H1 (cell line): ENCODE measurements at regions of chr19 and their contacts with region 1.

Region 1: DNA sequence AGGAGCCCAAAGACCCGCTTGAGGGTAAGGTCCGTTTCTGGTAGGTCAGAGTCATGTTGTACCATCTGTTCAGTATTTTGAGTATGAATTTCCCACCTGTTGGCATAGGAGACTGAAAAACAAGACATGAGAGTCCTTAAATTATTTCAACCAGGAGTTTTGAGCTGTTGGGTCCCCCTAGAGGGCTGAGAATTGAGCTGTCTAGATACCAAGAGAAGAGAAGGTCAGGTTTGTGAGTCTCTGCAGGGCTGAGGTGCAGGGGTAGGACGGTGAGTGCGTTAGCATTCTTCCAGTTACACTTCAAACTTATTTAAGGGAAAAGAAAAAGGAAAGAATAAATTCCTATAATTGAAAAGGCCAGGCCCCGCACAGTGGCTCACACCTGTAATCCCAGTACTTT is 5.0 kb downstream of the CBLC start:
- DNase-seq: no peak
- H3K4me3 ChIP-seq: no peak overlapping the region
- H3K27ac ChIP-seq: no peak overlapping the region
- H3K4me1 ChIP-seq: no peaks in the 10 kb centered on the region
- H3K27me3 ChIP-seq: no peaks in the 10 kb centered on the region
- CTCF ChIP-seq: no peak
- EP300 ChIP-seq: no peak
- POLR2A ChIP-seq: no peak
- RAD21 ChIP-seq: 0 out of 4 replicates have a peak, but pooled peaks of 1 of the 2 experiments have one; percentile 5

Region 2: DNA sequence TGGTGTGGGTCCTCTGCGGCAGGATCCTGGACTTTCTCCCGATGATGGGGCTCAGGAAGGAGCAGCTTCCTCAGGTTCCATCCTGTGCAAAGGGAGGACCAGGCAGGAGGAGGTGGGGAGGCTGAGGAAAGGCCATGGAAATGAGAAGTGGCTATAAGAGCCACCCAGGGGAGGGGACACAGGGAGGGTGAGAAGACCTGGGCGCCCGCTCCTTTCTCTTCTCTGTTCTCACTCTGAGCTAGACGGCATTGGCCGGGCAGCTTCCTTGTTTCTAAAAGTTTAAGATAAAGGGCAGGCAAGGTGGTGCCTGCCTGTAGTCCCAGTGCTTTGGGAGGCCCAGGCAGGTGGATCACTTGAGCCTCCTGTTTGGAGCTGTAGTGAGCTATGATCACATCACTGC is 50.1 kb before region 1 on chr19:
- CTCF ChIA-PET with region 1: interaction called, 12 read pairs
- POLR2A ChIA-PET with region 1: no interaction called
- DNase-seq: no peak
- H3K4me3 ChIP-seq: no peak overlapping the region
- H3K27ac ChIP-seq: no peak overlapping the region
- H3K4me1 ChIP-seq: no peaks in the 10 kb centered on the region; a peak in 1 of 7 replicates
- H3K27me3 ChIP-seq: no peaks in the 10 kb centered on the region
- CTCF ChIP-seq: no peak
- EP300 ChIP-seq: no peak
- POLR2A ChIP-seq: no peak
- RAD21 ChIP-seq: no peak

Region 3: DNA sequence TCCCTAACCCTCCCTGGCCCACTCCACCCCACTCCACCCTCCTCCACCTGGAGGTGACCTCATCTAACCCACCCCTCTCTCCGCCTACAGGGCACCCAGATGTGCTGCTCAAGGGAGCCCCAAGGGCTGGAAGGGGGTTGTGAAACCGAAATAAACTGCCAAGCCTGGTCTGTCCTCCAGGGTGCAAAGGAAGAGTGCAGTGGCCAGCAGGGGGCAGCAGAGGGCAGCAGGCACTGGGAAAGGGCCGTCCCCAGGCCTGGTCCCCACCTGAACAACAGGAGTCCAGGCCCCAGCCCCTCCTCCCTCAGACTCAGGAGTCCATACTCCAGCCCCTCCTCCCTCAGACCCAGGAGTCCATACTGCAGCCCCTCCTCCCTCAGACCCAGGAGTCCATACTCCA is 17.7 kb after region 1 on chr19:
- CTCF ChIA-PET with region 1: interaction called, 116 read pairs
- POLR2A ChIA-PET with region 1: interaction called, 8 read pairs
- DNase-seq: peak; percentile 91 to 99
- H3K4me3 ChIP-seq: no peak overlapping the region
- H3K27ac ChIP-seq: no peak overlapping the region
- H3K4me1 ChIP-seq: peaks cover 5 to 10% (median 6%) of the 10 kb centered on the region in 4 experiments; a peak in 6 of 7 replicates
- H3K27me3 ChIP-seq: peaks cover 0 to 19% (median 17%) of the 10 kb centered on the region in 4 experiments; a peak in 6 of 7 replicates
- CTCF ChIP-seq: peak; percentile 96 to 99 (median 99)
- EP300 ChIP-seq: no peak
- POLR2A ChIP-seq: no peak
- RAD21 ChIP-seq: peak; percentile 76 to 78

Region 4: DNA sequence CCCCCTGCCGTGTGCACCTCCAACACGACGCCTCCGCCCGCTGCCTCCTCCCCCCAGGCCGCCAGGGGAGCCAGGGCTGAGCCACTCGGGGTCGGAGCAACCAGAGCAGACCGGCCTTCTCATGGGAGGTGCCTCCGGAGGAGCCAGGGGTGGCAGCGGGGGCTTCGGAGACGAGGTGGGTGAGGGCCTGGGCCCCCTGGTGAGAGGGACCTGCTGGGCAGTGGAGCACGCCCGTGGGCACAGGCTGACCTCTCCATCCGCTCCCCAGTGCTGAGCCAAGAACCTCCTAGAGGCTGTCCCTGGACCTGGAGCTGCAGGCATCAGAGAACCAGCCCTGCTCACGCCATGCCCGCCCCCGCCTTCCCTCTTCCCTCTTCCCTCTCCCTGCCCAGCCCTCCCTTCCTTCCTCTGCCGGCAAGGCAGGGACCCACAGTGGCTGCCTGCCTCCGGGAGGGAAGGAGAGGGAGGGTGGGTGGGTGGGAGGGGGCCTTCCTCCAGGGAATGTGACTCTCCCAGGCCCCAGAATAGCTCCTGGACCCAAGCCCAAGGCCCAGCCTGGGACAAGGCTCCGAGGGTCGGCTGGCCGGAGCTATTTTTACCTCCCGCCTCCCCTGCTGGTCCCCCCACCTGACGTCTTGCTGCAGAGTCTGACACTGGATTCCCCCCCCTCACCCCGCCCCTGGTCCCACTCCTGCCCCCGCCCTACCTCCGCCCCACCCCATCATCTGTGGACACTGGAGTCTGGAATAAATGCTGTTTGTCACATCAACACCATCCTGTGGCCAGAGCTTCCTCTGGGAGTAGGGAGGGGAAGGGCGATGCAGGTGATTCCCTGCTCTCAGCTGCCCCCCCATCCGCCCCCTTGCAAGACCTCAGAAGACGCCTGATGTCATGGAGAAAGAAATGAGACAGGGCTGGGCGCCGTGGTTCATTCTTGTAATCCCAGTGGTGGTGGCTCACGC is 38.2 kb after region 1 on chr19:
- CTCF ChIA-PET with region 1: interaction called, 19 read pairs
- POLR2A ChIA-PET with region 1: interaction called, 3 read pairs
- DNase-seq: no peak
- H3K4me3 ChIP-seq: no peak overlapping the region
- H3K27ac ChIP-seq: no peak overlapping the region
- H3K4me1 ChIP-seq: 0 out of 7 replicates have a peak, but pooled peaks cover 0 to 3% (median 0%) of the 10 kb centered on the region in 4 experiments
- H3K27me3 ChIP-seq: peaks cover 0 to 10% (median 5%) of the 10 kb centered on the region in 4 experiments; a peak in 4 of 7 replicates
- CTCF ChIP-seq: no peak
- EP300 ChIP-seq: no peak
- POLR2A ChIP-seq: no peak
- RAD21 ChIP-seq: no peak

Region 5: GRCh38 chr19:44875666-44876451 is 93.1 kb after region 1 on chr19:
- CTCF ChIA-PET with region 1: no interaction called
- POLR2A ChIA-PET with region 1: no interaction called
- DNase-seq: no peak
- H3K4me3 ChIP-seq: no peak overlapping the region
- H3K27ac ChIP-seq: no peak overlapping the region
- H3K4me1 ChIP-seq: peaks cover 0 to 20% (median 3%) of the 10 kb centered on the region in 4 experiments; a peak in 5 of 7 replicates
- H3K27me3 ChIP-seq: no peaks in the 10 kb centered on the region
- CTCF ChIP-seq: no peak
- EP300 ChIP-seq: no peak
- POLR2A ChIP-seq: no peak
- RAD21 ChIP-seq: no peak

Region 6: GRCh38 chr19:44889830-44890365 is 107.2 kb after region 1 on chr19:
- CTCF ChIA-PET with region 1: no interaction called
- POLR2A ChIA-PET with region 1: no interaction called
- DNase-seq: no peak
- H3K4me3 ChIP-seq: peak overlapping the region; percentile 28 to 58 (median 48); a peak in 7 of 8 replicates
- H3K27ac ChIP-seq: peak overlapping the region; percentile 74; the same call in 1 of the 2 replicates
- H3K4me1 ChIP-seq: peaks cover 5 to 8% (median 7%) of the 10 kb centered on the region in 4 experiments
- H3K27me3 ChIP-seq: no peaks in the 10 kb centered on the region
- CTCF ChIP-seq: no peak
- EP300 ChIP-seq: no peak
- POLR2A ChIP-seq: no peak
- RAD21 ChIP-seq: no peak